PC-3 (cell line): ENCODE measurements at regions of chr20 and their contacts with region 1.

Region 1: DNA sequence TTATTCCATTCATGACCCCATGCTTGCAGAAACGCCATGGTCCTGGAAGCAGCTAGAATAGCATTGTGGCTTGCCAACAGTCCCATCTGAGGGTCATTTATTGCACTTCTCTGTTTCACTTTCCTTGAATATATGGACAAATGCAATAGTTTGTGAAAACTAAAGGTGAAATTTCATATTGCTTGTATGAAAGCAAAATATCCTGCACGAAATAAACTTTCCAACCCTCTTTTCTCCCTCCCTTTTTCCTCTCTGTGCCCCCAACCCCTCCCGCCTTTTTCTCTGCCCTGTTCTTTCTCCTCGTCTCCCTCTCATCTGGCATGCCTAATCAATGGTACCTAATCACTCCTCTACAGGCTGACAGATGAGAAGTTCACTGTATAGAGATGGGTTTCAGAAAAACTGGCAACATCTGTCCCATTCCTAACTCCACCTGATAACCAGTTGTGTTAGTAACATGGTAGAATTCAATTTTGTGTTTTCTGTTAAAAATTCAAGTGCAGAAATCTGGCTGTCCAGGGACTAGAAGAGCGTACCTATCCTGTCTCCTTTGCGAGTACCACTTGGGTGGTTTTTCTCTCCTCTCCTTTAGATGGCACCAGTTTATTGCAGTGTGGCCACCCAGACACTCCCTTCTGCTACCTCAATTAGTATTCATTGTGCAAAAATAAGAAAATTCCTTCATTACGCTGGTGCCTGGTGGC is 198.6 kb downstream of the FOXA2 start:
- DNase-seq: peak; percentile 60
- ATAC-seq: no peak
- H3K4me3 ChIP-seq: no peak overlapping the region
- H3K27ac ChIP-seq: no peak overlapping the region
- H3K4me1 ChIP-seq: peaks cover 64% of the 10 kb centered on the region
- H3K27me3 ChIP-seq: no peaks in the 10 kb centered on the region
- CTCF ChIP-seq: peak; percentile 84

Region 2: GRCh38 chr20:22374678-22375590 is 10.8 kb before region 1 on chr20:
- CTCF ChIA-PET with region 1: no interaction called
- POLR2A ChIA-PET with region 1: interaction called, 7 read pairs
- intact Hi-C with region 1: loop called (anchors 1 kb)
- DNase-seq: peak; percentile 76
- ATAC-seq: peak; percentile 18
- H3K4me3 ChIP-seq: peak overlapping the region; percentile 43
- H3K27ac ChIP-seq: peak overlapping the region; percentile 85
- H3K4me1 ChIP-seq: peaks cover 65% of the 10 kb centered on the region
- H3K27me3 ChIP-seq: no peaks in the 10 kb centered on the region
- CTCF ChIP-seq: no peak

Region 3: GRCh38 chr20:22430154-22430745 is 44.5 kb after region 1 on chr20:
- CTCF ChIA-PET with region 1: no interaction called
- POLR2A ChIA-PET with region 1: interaction called, 5 read pairs
- intact Hi-C with region 1: loop called (anchors 2 kb)
- DNase-seq: peak; percentile 89
- ATAC-seq: peak; percentile 95
- H3K4me3 ChIP-seq: peak overlapping the region; percentile 26; the same call in 1 of the 2 replicates
- H3K27ac ChIP-seq: no peak overlapping the region
- H3K4me1 ChIP-seq: peaks cover 17% of the 10 kb centered on the region
- H3K27me3 ChIP-seq: no peaks in the 10 kb centered on the region
- CTCF ChIP-seq: no peak

Region 4: GRCh38 chr20:22490287-22491193 is 104.8 kb after region 1 on chr20:
- CTCF ChIA-PET with region 1: no interaction called
- POLR2A ChIA-PET with region 1: no interaction called
- intact Hi-C with region 1: loop called (anchors 5 kb)
- DNase-seq: peak; percentile 61
- ATAC-seq: peak; percentile 89
- H3K4me3 ChIP-seq: no peak overlapping the region
- H3K27ac ChIP-seq: no peak overlapping the region
- H3K4me1 ChIP-seq: peaks cover 10% of the 10 kb centered on the region; the same call in 1 of the 2 replicates
- H3K27me3 ChIP-seq: no peaks in the 10 kb centered on the region
- CTCF ChIP-seq: peak; percentile 71

Region 5: GRCh38 chr20:22586645-22587310 is 201.0 kb after region 1 on chr20:
- CTCF ChIA-PET with region 1: interaction called, 7 read pairs
- POLR2A ChIA-PET with region 1: no interaction called
- intact Hi-C with region 1: loop called (anchors 1 kb)
- DNase-seq: peak; percentile 63
- ATAC-seq: peak; percentile 19
- H3K4me3 ChIP-seq: peak overlapping the region; percentile 58
- H3K27ac ChIP-seq: no peak overlapping the region
- H3K4me1 ChIP-seq: peaks cover 6% of the 10 kb centered on the region; the same call in 1 of the 2 replicates
- H3K27me3 ChIP-seq: peaks cover 27% of the 10 kb centered on the region
- CTCF ChIP-seq: peak; percentile 95

Region 6: GRCh38 chr20:22836877-22837276 is 451.1 kb after region 1 on chr20:
- CTCF ChIA-PET with region 1: no interaction called
- POLR2A ChIA-PET with region 1: no interaction called
- intact Hi-C with region 1: no loop called
- DNase-seq: peak; percentile 21
- ATAC-seq: no peak
- H3K4me3 ChIP-seq: no peak overlapping the region
- H3K27ac ChIP-seq: no peak overlapping the region
- H3K4me1 ChIP-seq: peaks cover 15% of the 10 kb centered on the region
- H3K27me3 ChIP-seq: no peaks in the 10 kb centered on the region
- CTCF ChIP-seq: no peak

Region 7: GRCh38 chr20:23350196-23350903 is 964.6 kb after region 1 on chr20 and contains the start of gene NXT1:
- CTCF ChIA-PET with region 1: no interaction called
- POLR2A ChIA-PET with region 1: no interaction called
- intact Hi-C with region 1: loop called (anchors 10 kb)
- DNase-seq: peak; percentile 99
- ATAC-seq: peak; percentile 87
- H3K4me3 ChIP-seq: peak within 1 kb of the TSS; percentile 89
- H3K27ac ChIP-seq: peak within 1 kb of the TSS; percentile 87
- H3K4me1 ChIP-seq: peaks cover 18% of the 10 kb centered on the region
- H3K27me3 ChIP-seq: no peaks in the 10 kb centered on the region
- CTCF ChIP-seq: no peak
- total RNA-seq, gene NXT1: 82.0 and 98.0 TPM in 2 replicates